ENCODE measurements at regions of chr5 and their contacts with region 1.

Region 1: GRCh38 chr5:132526290-132526973 is 16.9 kb downstream of the IL5 start:
- DNase-seq: peak; percentile 53
- H3K4me3 ChIP-seq: no peak overlapping the region
- H3K27ac ChIP-seq: no peak overlapping the region
- H3K4me1 ChIP-seq: no peaks in the 10 kb centered on the region
- H3K27me3 ChIP-seq: no peaks in the 10 kb centered on the region
- CTCF ChIP-seq: peak; percentile 90

Region 2: DNA sequence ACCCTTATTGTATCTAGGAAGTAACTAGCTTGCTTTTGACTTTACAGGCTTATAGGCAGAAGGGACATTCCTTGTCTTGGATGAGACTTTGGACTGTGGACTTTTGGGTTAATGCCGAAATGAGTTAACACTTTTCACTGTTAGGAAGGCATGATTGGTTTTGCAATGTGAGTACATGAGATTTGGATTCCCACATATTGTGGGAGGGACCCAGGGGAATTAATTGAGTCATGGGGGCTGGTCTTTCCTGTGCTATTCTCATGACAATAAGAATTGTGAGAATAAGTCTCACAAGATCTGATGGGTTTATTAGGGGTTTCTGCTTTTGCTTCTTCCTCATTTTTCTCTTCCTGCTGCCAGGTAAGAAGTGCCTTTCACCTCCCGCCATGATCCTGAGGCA is 1778.9 kb before region 1 on chr5:
- CTCF ChIA-PET with region 1: no interaction called
- POLR2A ChIA-PET with region 1: no interaction called
- intact Hi-C with region 1: no loop called
- DNase-seq: peak; percentile 5
- H3K4me3 ChIP-seq: no peak overlapping the region
- H3K27ac ChIP-seq: no peak overlapping the region
- H3K4me1 ChIP-seq: no peaks in the 10 kb centered on the region
- H3K27me3 ChIP-seq: no peaks in the 10 kb centered on the region
- CTCF ChIP-seq: no peak

Region 3: GRCh38 chr5:132866342-132867045 is 340.1 kb after region 1 on chr5 and contains the starts of genes GDF9 and UQCRQ:
- CTCF ChIA-PET with region 1: no interaction called
- POLR2A ChIA-PET with region 1: no interaction called
- intact Hi-C with region 1: loop called (anchors 10 kb)
- DNase-seq: peak; percentile 99
- H3K4me3 ChIP-seq: peak within 1 kb of the TSS; percentile 77
- H3K27ac ChIP-seq: peak within 1 kb of the TSS; percentile 94
- H3K4me1 ChIP-seq: peaks cover 12% of the 10 kb centered on the region
- H3K27me3 ChIP-seq: no peaks in the 10 kb centered on the region
- CTCF ChIP-seq: 0 out of 2 replicates have a peak, but pooled peaks have one; percentile 27
- total RNA-seq, gene GDF9: 0.32 and 1.1 TPM in 2 replicates
- total RNA-seq, gene UQCRQ: 542 and 564 TPM in 2 replicates

Measured in A673 (cell line).